ENCODE measurements at regions of chr11 and their contacts with region 1.

Region 1: GRCh38 chr11:61083601-61084147 is 18.6 kb upstream of the CD5 start:
- DNase-seq: no peak
- ATAC-seq: no peak
- H3K4me3 ChIP-seq: no peak overlapping the region
- H3K27ac ChIP-seq: no peak overlapping the region
- H3K4me1 ChIP-seq: no peaks in the 10 kb centered on the region
- H3K27me3 ChIP-seq: no peaks in the 10 kb centered on the region

Region 2: GRCh38 chr11:61049859-61050258 is 33.8 kb before region 1 on chr11:
- intact Hi-C with region 1: loop called in 1 of 2 experiments (anchors 5 kb)
- DNase-seq: no peak
- ATAC-seq: no peak
- H3K4me3 ChIP-seq: no peak overlapping the region
- H3K27ac ChIP-seq: no peak overlapping the region
- H3K4me1 ChIP-seq: no peaks in the 10 kb centered on the region
- H3K27me3 ChIP-seq: no peaks in the 10 kb centered on the region